ENCODE measurements at regions of chr10 and their contacts with region 1.

Region 1: DNA sequence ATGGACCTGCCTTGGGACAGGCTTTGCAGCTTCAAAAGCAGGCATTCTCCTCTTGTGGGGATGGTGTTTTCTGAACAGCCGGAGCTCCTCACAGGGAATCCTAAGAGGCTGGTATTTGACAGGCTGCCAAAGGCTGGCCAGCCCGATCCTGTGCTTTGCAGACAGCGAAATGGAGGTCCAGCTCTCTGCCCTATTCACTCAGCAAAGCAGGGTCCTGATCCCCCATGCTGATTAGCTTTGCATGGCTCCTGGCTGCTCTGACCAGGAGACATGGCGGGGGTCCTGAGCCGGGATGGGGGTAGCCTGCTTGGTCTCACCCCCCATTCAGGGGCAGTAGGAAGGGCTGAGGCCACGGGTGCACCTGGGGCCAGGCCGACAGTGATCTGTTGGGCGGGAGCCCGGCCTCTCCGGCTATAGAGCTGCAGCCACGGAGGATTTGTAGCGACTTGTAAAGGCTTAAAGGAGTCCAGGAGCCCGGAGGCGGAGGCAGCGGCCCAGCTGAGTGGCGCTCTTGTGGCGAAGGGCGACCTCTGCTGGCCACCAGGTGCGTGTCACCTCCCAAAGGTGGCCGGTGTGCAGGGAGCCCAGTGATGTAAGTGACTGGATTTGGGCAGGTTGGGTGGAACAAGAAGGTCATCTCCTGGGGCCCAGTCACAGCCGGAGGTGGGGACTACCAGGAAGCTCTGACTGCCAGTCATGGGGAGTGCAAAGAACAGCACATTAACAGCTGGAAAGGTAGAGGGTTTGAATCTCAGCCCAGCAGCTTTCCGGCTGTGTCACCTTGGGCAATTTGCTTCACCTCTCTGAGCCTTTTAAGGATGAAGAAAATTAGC is 126.5 kb downstream of the ZMIZ1 start:
- DNase-seq: peak; percentile 66 to 72 (median 71)
- H3K4me3 ChIP-seq: no peak overlapping the region
- H3K4me3 Mint-ChIP-seq: peak overlapping the region in 2 of 8 donors; percentile 21 to 32
- H3K27ac ChIP-seq: no peak overlapping the region
- H3K27ac Mint-ChIP-seq: peak overlapping the region in 4 of 7 donors; percentile 18 to 44 (median 34)
- H3K4me1 ChIP-seq: peaks cover 3% of the 10 kb centered on the region
- H3K4me1 Mint-ChIP-seq: peaks cover 0 to 6% (median 2%) of the 10 kb centered on the region in 4 donors
- H3K27me3 ChIP-seq: no peaks in the 10 kb centered on the region
- H3K27me3 Mint-ChIP-seq: no peaks in the 10 kb centered on the region

Region 2: DNA sequence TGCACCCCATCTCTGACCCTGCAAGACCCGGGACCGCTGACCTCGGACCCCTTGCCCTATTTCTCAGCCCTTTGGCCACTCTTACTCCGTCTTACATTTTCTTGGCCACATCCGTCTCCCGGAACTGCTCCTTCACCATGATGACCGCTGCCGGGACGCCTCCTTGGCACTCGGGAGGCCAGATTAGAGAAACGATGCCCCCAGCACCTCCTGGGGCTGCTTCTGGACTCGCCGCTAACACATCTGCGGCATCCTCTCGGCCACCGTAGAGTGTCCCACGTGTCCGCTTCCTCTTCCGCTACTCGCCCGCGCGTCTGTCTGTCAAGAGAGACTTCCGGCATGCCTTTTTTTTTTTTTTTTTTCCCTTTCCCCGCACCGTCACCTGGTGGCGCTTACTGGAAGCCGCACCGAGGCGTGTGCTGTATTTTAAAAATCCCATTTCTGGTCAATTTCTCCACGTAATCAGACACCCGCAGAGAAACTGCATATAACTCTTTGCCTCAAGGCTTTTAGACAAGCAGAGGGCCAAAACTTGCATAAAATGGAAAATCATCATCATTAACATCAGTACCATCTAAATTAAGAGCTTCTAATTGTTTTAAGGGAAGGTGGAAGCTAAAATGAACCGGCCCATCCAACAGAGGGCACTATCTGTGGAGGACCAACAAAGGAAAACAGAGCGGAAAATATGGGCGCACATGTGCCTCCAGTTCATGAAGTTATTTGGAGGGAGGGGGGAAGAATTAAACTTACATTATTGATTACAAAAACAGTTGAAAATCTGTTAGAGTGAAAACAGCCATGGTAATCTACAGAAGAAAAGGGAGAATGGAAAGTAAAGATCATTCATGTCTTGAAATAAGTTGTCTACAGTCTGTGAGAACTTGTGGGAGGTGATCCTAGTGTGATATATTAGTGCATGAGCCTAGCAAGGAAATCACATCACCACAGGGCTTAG is 1165.8 kb before region 1 on chr10 and contains the start of gene POLR3A:
- CTCF ChIA-PET with region 1: interaction called, 3 read pairs
- POLR2A ChIA-PET with region 1: no interaction called
- intact Hi-C with region 1: loop called (anchors 1 kb)
- DNase-seq: peak; percentile 91 to 93 (median 92)
- H3K4me3 ChIP-seq: peak within 1 kb of the TSS; percentile 80 to 98
- H3K4me3 Mint-ChIP-seq: peak within 1 kb of the TSS; percentile 98 to 99 (median 99)
- H3K27ac ChIP-seq: peak within 1 kb of the TSS; percentile 71
- H3K27ac Mint-ChIP-seq: peak within 1 kb of the TSS; percentile 92 to 98 (median 96)
- H3K4me1 ChIP-seq: peaks cover 32% of the 10 kb centered on the region
- H3K4me1 Mint-ChIP-seq: peaks cover 28 to 52% (median 40%) of the 10 kb centered on the region in 4 donors
- H3K27me3 ChIP-seq: no peaks in the 10 kb centered on the region
- H3K27me3 Mint-ChIP-seq: no peaks in the 10 kb centered on the region
- total RNA-seq, gene POLR3A: 16.9 to 17.6 TPM

Region 3: GRCh38 chr10:78260141-78260540 is 935.2 kb before region 1 on chr10:
- CTCF ChIA-PET with region 1: interaction called, 10 read pairs
- POLR2A ChIA-PET with region 1: no interaction called
- intact Hi-C with region 1: no loop called
- DNase-seq: no peak
- H3K4me3 ChIP-seq: no peak overlapping the region
- H3K4me3 Mint-ChIP-seq: no peak overlapping the region
- H3K27ac ChIP-seq: no peak overlapping the region
- H3K27ac Mint-ChIP-seq: no peak overlapping the region
- H3K4me1 ChIP-seq: no peaks in the 10 kb centered on the region
- H3K4me1 Mint-ChIP-seq: no peaks in the 10 kb centered on the region
- H3K27me3 ChIP-seq: no peaks in the 10 kb centered on the region
- H3K27me3 Mint-ChIP-seq: peaks cover 0 to 9% of the 10 kb centered on the region in 2 donors

Region 4: GRCh38 chr10:78657163-78657861 is 538.0 kb before region 1 on chr10:
- CTCF ChIA-PET with region 1: interaction called, 8 read pairs
- POLR2A ChIA-PET with region 1: no interaction called
- intact Hi-C with region 1: loop called (anchors 5 kb)
- DNase-seq: peak; percentile 34 to 48 (median 41)
- H3K4me3 ChIP-seq: no peak overlapping the region
- H3K4me3 Mint-ChIP-seq: no peak overlapping the region
- H3K27ac ChIP-seq: no peak overlapping the region
- H3K27ac Mint-ChIP-seq: no peak overlapping the region
- H3K4me1 ChIP-seq: no peaks in the 10 kb centered on the region
- H3K4me1 Mint-ChIP-seq: no peaks in the 10 kb centered on the region
- H3K27me3 ChIP-seq: no peaks in the 10 kb centered on the region
- H3K27me3 Mint-ChIP-seq: peaks cover 2 to 24% of the 10 kb centered on the region in 2 donors

Region 5: GRCh38 chr10:78931321-78932053 is 263.8 kb before region 1 on chr10:
- CTCF ChIA-PET with region 1: interaction called, 58 read pairs
- POLR2A ChIA-PET with region 1: no interaction called
- intact Hi-C with region 1: no loop called
- DNase-seq: no peak
- H3K4me3 ChIP-seq: no peak overlapping the region
- H3K4me3 Mint-ChIP-seq: no peak overlapping the region
- H3K27ac ChIP-seq: no peak overlapping the region
- H3K27ac Mint-ChIP-seq: no peak overlapping the region
- H3K4me1 ChIP-seq: no peaks in the 10 kb centered on the region
- H3K4me1 Mint-ChIP-seq: no peaks in the 10 kb centered on the region
- H3K27me3 ChIP-seq: no peaks in the 10 kb centered on the region
- H3K27me3 Mint-ChIP-seq: peaks cover 2% of the 10 kb centered on the region in 2 donors

Region 6: GRCh38 chr10:79068562-79069324 is 126.6 kb before region 1 on chr10 and contains the start of gene ZMIZ1:
- CTCF ChIA-PET with region 1: interaction called, 10 read pairs
- POLR2A ChIA-PET with region 1: interaction called, 3 read pairs
- intact Hi-C with region 1: loop called (anchors 2 kb)
- DNase-seq: peak; percentile 83 to 87 (median 85)
- H3K4me3 ChIP-seq: peak within 1 kb of the TSS; percentile 61 to 85
- H3K4me3 Mint-ChIP-seq: peak within 1 kb of the TSS; percentile 94 to 99 (median 97)
- H3K27ac ChIP-seq: peak within 1 kb of the TSS; percentile 76
- H3K27ac Mint-ChIP-seq: peak within 1 kb of the TSS; percentile 90 to 97 (median 95)
- H3K4me1 ChIP-seq: peaks cover 50% of the 10 kb centered on the region
- H3K4me1 Mint-ChIP-seq: peaks cover 29 to 71% (median 44%) of the 10 kb centered on the region in 4 donors
- H3K27me3 ChIP-seq: no peaks in the 10 kb centered on the region
- H3K27me3 Mint-ChIP-seq: no peaks in the 10 kb centered on the region
- total RNA-seq, gene ZMIZ1: 23.1 to 25.4 TPM

Region 7: DNA sequence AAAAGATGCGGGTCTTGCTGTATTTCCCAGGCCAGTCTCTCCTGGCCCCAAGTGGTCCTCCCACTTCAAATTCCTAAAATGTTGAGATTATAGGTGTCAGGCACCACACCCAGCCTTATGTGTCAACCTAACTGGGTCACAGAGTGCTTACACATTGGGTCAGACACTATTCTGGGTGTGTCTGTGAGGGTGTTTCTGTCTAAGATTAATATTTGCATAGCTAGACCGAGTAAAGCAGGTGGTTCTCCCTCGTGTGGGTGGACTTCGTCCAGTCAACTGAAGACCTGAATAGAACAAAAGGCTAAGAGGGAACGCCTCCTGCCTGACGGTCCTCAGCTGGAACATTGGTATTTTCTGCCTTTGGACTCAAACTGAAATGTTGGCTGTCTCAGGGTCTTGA is 163.5 kb after region 1 on chr10:
- CTCF ChIA-PET with region 1: no interaction called
- POLR2A ChIA-PET with region 1: no interaction called
- intact Hi-C with region 1: no loop called
- DNase-seq: no peak
- H3K4me3 ChIP-seq: no peak overlapping the region
- H3K4me3 Mint-ChIP-seq: no peak overlapping the region
- H3K27ac ChIP-seq: no peak overlapping the region
- H3K27ac Mint-ChIP-seq: no peak overlapping the region
- H3K4me1 ChIP-seq: peaks cover 9% of the 10 kb centered on the region
- H3K4me1 Mint-ChIP-seq: peaks cover 15 to 45% (median 22%) of the 10 kb centered on the region in 4 donors
- H3K27me3 ChIP-seq: no peaks in the 10 kb centered on the region
- H3K27me3 Mint-ChIP-seq: peaks cover 0 to 3% of the 10 kb centered on the region in 2 donors